ENCODE measurements at regions of chr6 and their contacts with region 1.

Region 1: DNA sequence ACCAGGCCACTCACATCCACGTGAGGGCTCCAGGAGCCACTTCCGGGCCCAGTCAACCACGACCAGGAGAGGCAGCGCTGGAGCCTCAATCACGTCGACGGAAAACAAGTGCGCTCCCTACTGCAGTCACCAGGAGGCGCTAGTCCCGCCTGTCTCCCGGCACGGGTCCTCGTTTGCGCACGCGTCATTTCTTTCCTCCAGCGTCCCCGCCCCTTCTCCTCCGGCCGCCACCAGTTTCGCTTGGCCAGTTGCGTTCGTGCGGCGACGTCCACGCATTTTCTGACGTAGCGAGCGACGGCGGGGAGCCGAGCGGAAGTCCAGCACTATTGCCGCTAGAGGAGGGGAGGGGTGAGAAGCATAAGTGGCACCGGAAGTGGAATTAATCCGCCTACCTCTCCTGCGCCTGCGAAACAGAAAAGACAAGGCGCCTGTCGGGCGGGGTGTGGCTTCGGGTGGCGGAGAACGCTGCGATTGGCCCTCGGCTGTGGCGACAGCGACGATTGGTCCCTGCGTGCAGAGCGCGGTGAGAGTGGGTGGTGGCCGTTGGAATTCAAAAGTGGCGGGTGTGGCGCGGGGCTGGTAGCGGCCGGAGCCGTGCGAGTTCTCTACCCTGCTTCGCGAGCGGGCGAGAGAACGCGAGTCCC is at the start of gene KIFC1:
- DNase-seq: peak; percentile 100
- H3K4me3 Mint-ChIP-seq: peak within 1 kb of the TSS; percentile 94
- H3K27ac Mint-ChIP-seq: peak within 1 kb of the TSS; percentile 95
- H3K4me1 Mint-ChIP-seq: peaks cover 38% of the 10 kb centered on the region
- H3K27me3 Mint-ChIP-seq: no peaks in the 10 kb centered on the region
- total RNA-seq, gene KIFC1: 94.6 to 103 TPM

Region 2: GRCh38 chr6:33248925-33249731 is 142.3 kb before region 1 on chr6:
- CTCF ChIA-PET with region 1: no interaction called
- POLR2A ChIA-PET with region 1: interaction called, 3 read pairs
- intact Hi-C with region 1: loop called (anchors 1 kb)
- DNase-seq: peak; percentile 99
- H3K4me3 Mint-ChIP-seq: peak overlapping the region; percentile 88
- H3K27ac Mint-ChIP-seq: peak overlapping the region; percentile 90
- H3K4me1 Mint-ChIP-seq: peaks cover 43% of the 10 kb centered on the region
- H3K27me3 Mint-ChIP-seq: peaks cover 3% of the 10 kb centered on the region

Region 3: DNA sequence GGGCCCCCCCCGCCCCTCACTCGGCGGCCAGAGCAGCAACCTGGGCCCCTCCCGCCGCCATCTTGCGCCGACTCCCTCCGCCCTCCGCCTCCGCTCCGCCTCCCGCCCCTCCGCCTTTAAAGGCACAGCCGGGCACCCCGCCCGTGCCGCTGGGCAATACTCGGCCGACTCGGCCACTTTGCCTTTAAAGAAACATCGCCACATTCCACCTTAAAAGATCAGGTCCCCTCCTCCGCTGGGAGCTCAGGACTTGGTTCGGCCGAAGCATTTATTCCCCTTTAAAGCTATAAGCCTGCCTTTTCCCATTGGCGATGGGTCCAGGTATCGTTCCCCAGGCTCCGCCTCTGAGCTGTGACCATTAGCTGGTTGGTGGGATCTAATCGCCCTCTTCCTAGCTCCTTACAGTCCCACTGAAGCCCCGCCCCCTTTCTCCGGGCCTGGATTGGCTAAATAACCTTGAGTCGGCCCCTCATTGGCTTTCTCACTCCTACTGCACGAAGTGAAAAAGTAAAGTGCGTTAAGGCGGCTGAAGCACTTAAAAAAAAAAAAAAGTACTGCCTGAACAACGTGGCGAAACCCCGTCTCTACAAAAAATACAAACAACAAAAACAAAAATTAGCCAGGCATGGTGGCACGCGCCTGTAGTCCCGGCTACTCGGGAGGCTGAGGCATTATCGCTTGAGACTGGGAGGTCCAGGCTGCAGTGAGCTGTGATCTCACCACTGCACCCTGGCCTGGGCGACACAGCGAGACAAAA is 73.6 kb before region 1 on chr6 and contains the start of gene ZBTB22:
- CTCF ChIA-PET with region 1: interaction called, 4 read pairs
- POLR2A ChIA-PET with region 1: no interaction called
- intact Hi-C with region 1: loop called (anchors 1 kb)
- DNase-seq: peak; percentile 97
- H3K4me3 Mint-ChIP-seq: peak within 1 kb of the TSS; percentile 94
- H3K27ac Mint-ChIP-seq: peak within 1 kb of the TSS; percentile 95
- H3K4me1 Mint-ChIP-seq: peaks cover 71% of the 10 kb centered on the region
- H3K27me3 Mint-ChIP-seq: no peaks in the 10 kb centered on the region
- total RNA-seq, gene ZBTB22: 11.0 to 12.1 TPM

Region 4: DNA sequence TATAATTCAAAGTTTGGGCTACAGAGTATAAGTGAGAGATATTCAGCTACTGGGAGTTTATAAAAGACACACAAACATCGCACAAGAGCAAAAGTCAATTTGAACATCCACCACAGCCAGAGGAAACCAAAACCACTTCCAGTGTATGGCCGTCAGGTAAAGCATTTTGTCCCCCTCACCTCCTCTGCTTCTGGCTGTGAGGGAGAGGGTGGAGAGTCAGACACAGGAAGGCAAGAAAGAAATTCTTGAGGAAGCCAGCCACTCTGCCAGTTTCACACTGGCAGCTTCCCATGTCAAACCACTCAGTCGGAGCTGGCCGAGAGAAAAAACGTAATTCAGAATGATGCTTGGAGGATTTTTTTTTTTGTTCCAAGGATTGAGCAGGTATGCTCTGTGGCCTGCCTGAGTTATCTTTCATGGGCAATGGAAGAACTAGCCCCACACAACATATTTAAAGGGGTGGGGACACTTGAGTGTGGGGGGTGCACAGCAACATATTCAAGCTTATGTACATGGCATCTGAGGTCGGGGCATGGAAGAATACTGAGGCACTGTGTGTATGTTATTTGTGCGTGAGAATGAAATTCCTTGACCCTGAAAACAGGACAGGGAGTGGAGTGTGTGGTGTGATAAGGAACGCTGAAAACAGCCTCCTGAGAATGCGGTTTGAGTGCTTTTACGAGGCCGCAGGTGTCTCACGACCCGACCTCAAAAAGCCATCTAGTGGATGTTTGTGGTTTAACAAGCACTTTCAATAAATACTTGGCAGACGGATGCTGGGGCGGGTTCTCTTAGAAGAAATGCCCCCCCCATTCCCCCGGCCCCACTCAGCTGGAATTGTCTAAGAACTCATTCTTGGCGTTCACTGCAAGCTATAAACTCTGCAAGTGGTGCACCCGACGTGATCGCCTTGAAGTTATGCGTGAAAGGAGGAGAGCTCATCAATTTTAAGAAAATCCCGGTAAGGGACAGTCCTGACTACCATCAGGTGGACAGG is 46.4 kb before region 1 on chr6:
- CTCF ChIA-PET with region 1: interaction called, 4 read pairs
- POLR2A ChIA-PET with region 1: interaction called, 3 read pairs
- intact Hi-C with region 1: loop called (anchors 1 kb)
- DNase-seq: peak; percentile 75
- H3K4me3 Mint-ChIP-seq: peak overlapping the region; percentile 73
- H3K27ac Mint-ChIP-seq: peak overlapping the region; percentile 85
- H3K4me1 Mint-ChIP-seq: peaks cover 24% of the 10 kb centered on the region
- H3K27me3 Mint-ChIP-seq: no peaks in the 10 kb centered on the region

Region 5: DNA sequence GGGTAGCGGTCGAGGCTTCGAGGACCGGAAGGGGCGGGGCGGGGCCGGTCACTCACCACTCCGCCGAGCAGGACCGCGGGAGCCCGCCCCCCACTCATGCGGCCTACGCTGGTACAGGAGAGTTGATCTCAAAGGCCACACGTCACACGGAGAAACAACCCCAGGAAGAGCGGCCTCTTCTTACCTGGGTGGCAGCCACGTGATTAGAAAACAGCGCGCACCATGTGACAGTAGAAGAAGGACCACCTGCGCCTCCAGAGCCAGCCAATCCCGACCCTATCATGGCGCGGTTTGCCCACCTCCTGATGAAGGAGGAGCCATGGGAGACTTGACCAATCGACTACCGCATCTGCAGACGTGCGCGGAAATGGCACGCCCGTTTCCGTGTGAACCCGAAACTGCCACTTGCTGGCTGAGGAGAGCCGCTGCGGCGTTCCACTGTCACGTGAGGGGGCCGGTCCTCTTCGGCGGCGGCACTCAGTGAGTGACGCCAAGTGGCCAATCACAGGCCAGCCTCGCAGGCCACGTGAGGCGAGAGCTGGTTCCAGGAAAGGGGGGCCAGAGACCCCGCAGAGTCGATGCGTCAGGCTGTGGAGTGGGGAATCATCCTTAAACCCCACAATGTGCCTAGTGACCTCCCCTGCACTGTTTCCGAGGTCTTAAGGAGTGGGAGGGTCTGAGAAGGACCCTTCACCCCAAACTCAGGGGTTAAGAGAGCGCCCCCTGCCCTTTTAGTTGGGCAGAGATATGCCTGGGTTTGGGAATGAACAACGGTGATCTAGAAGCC is 26.7 kb after region 1 on chr6 and contains the start of gene CUTA:
- CTCF ChIA-PET with region 1: interaction called, 5 read pairs
- POLR2A ChIA-PET with region 1: interaction called, 4 read pairs
- intact Hi-C with region 1: loop called (anchors 1 kb)
- DNase-seq: peak; percentile 100
- H3K4me3 Mint-ChIP-seq: peak within 1 kb of the TSS; percentile 94
- H3K27ac Mint-ChIP-seq: peak within 1 kb of the TSS; percentile 99
- H3K4me1 Mint-ChIP-seq: peaks cover 56% of the 10 kb centered on the region
- H3K27me3 Mint-ChIP-seq: no peaks in the 10 kb centered on the region
- total RNA-seq, gene CUTA: 190 to 198 TPM

Region 6: DNA sequence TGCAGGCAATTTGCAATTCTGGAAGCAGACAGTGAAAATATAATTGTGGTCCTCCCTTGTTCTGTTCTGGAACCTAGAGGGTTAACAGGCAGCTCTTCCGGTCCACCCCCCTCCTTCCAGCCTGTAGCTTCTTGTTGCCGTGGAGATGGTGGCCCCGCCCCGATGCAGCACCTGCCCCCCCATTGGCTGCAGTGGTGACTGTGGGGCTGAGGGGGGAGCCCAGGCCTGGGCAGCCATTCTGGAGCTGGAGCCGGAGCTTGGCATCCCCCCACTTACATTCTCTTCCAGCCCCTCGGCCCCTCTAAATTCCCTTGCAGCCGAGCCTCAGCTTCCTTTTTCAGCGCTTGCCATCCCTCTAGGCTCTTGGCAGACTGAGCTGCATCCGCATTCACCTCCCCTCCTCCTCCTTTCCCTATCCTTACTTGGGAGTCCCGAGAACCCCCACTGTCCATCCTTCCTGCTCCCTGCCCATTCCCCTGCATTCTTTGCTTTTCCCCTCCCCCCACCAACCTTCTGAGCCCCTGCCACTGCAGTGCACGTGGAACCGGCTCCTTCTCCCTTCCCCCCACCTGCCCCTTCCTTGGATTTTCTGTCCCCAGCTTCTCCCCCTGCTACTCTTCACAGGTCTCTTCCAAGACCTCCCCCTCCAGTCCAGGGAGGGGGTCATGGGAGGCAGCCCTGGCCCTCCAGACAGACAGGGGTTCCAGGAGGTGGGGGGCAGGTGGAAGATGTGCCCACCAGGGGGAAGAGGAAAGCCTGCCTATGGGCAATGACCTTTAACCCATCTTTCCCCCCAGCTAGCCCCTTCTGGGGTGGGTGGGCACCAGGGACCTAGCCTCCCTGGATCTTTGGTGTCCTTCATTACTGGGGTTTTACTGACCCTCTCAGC is 39.8 kb after region 1 on chr6:
- CTCF ChIA-PET with region 1: interaction called, 21 read pairs
- POLR2A ChIA-PET with region 1: interaction called, 16 read pairs
- intact Hi-C with region 1: loop called (anchors 1 kb)
- DNase-seq: peak; percentile 88
- H3K4me3 Mint-ChIP-seq: peak overlapping the region; percentile 26
- H3K27ac Mint-ChIP-seq: peak overlapping the region; percentile 87
- H3K4me1 Mint-ChIP-seq: peaks cover 52% of the 10 kb centered on the region
- H3K27me3 Mint-ChIP-seq: no peaks in the 10 kb centered on the region

Region 7: GRCh38 chr6:33570806-33571636 is 179.6 kb after region 1 on chr6:
- CTCF ChIA-PET with region 1: interaction called, 3 read pairs
- POLR2A ChIA-PET with region 1: no interaction called
- intact Hi-C with region 1: loop called (anchors 1 kb)
- DNase-seq: peak; percentile 97
- H3K4me3 Mint-ChIP-seq: peak overlapping the region; percentile 82
- H3K27ac Mint-ChIP-seq: peak overlapping the region; percentile 99
- H3K4me1 Mint-ChIP-seq: peaks cover 41% of the 10 kb centered on the region
- H3K27me3 Mint-ChIP-seq: no peaks in the 10 kb centered on the region

Measured in activated CD4-positive, alpha-beta memory T cell treated with anti-CD3 and anti-CD28 coated beads for 36 hours (primary cell).